ENCODE measurements at regions of chr2 and their contacts with region 1.

Region 1: GRCh38 chr2:176088048-176088936 is 4.2 kb upstream of the HOXD13 start:
- DNase-seq: peak; percentile 40
- ATAC-seq: peak; percentile 92
- H3K4me3 ChIP-seq: peak overlapping the region; percentile 36 to 75 (median 51); a peak in 5 of 6 replicates
- H3K27ac ChIP-seq: no peak overlapping the region
- H3K4me1 ChIP-seq: peaks cover 25% of the 10 kb centered on the region
- H3K27me3 ChIP-seq: peaks cover 19 to 94% of the 10 kb centered on the region in 2 experiments
- CTCF ChIP-seq: peak; percentile 96
- EP300 ChIP-seq: no peak
- POLR2A ChIP-seq: no peak
- RAD21 ChIP-seq: peak; percentile 87

Region 2: DNA sequence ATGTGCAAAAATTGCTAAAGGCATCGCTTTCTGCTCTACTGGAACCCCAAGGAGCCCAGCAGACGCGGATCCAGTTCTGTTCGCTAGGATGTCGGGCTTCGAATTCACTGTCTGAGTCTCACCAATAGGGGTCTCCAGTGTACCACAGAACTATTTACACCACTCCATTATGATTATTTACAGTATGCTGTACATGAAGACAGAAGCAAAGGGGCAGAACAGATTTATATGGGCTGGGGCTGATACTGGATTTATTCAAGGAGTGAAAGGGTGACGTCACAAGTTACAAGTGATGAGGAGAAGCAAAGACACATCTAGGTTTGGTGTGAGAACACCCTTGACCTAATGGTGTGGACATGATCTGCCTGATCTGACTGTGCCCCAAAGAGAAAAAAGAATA is 721.5 kb before region 1 on chr2:
- CTCF ChIA-PET with region 1: interaction called, 14 read pairs
- POLR2A ChIA-PET with region 1: no interaction called
- in situ Hi-C with region 1: no loop called
- intact Hi-C with region 1: loop called (anchors 1 kb)
- DNase-seq: peak; percentile 53
- ATAC-seq: peak; percentile 97
- H3K4me3 ChIP-seq: no peak overlapping the region
- H3K27ac ChIP-seq: no peak overlapping the region
- H3K4me1 ChIP-seq: no peaks in the 10 kb centered on the region
- H3K27me3 ChIP-seq: peaks cover 0 to 37% of the 10 kb centered on the region in 2 experiments; a peak in 3 of 5 replicates
- CTCF ChIP-seq: peak; percentile 91
- EP300 ChIP-seq: no peak
- POLR2A ChIP-seq: no peak
- RAD21 ChIP-seq: peak; percentile 84

Region 3: DNA sequence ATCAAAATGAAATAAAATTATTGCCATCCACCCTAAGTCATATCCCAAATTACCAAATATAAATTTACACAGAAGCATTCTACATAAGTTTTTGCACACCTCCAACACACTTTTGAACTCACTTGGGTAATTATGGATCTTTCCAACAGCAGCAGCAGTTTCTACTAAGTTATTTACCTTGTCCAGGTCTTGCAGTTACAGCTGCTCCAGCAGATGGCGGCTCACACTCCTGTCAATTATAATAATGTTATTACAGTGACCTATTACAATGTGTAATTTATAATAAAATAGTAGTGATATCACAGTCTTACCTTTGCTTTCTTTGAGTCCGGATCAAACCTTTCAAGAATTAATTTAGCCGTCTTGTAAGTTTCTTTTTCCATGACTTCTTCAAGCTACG is 124.1 kb before region 1 on chr2:
- CTCF ChIA-PET with region 1: interaction called, 4 read pairs
- POLR2A ChIA-PET with region 1: no interaction called
- in situ Hi-C with region 1: no loop called
- intact Hi-C with region 1: loop called (anchors 1 kb)
- DNase-seq: peak; percentile 20
- ATAC-seq: peak; percentile 66
- H3K4me3 ChIP-seq: no peak overlapping the region
- H3K27ac ChIP-seq: no peak overlapping the region
- H3K4me1 ChIP-seq: no peaks in the 10 kb centered on the region
- H3K27me3 ChIP-seq: no peaks in the 10 kb centered on the region
- CTCF ChIP-seq: 0 out of 2 replicates have a peak, but pooled peaks have one; percentile 26
- EP300 ChIP-seq: no peak
- POLR2A ChIP-seq: no peak
- RAD21 ChIP-seq: peak; percentile 19; the same call in 1 of the 2 replicates

Measured in HepG2 (cell line).